ENCODE measurements at regions of chrX and their contacts with region 1.

Region 1: GRCh38 chrX:124346117-124346876 is at the start of gene SH2D1A:
- DNase-seq: peak; percentile 80
- H3K4me3 Mint-ChIP-seq: peak within 1 kb of the TSS; percentile 88
- H3K27ac Mint-ChIP-seq: peak within 1 kb of the TSS; percentile 99
- H3K4me1 Mint-ChIP-seq: peaks cover 38% of the 10 kb centered on the region
- H3K27me3 Mint-ChIP-seq: no peaks in the 10 kb centered on the region
- total RNA-seq, gene SH2D1A: 51.7 and 53.9 TPM in 2 replicates

Region 2: GRCh38 chrX:123833387-123833786 is 512.9 kb before region 1 on chrX:
- intact Hi-C with region 1: loop called (anchors 10 kb)
- DNase-seq: peak; percentile 87
- H3K4me3 Mint-ChIP-seq: no peak overlapping the region
- H3K27ac Mint-ChIP-seq: no peak overlapping the region
- H3K4me1 Mint-ChIP-seq: peaks cover 9% of the 10 kb centered on the region
- H3K27me3 Mint-ChIP-seq: peaks cover 5% of the 10 kb centered on the region

Region 3: DNA sequence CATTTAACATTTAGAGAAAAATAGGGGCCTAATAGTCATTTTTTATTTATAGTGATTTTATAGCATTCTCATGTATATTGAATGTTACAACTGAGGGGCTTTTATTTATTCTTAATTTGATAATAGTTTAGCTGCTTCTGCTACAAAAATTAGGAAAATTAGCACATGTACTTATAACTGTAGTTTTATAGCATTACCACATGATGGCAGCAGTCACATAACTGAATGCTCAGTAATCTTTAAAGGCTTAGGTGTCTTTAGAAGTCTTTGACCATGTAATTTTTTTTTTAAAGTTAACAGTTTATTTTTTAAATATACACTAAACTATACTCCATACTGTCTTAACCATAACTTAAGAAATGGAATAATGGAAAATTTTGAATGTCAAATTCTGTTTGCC is 248.2 kb before region 1 on chrX:
- intact Hi-C with region 1: loop called (anchors 5 kb)
- DNase-seq: no peak
- H3K4me3 Mint-ChIP-seq: no peak overlapping the region
- H3K27ac Mint-ChIP-seq: no peak overlapping the region
- H3K4me1 Mint-ChIP-seq: no peaks in the 10 kb centered on the region
- H3K27me3 Mint-ChIP-seq: no peaks in the 10 kb centered on the region

Region 4: GRCh38 chrX:124280294-124280902 is 65.9 kb before region 1 on chrX:
- intact Hi-C with region 1: loop called (anchors 5 kb)
- DNase-seq: no peak
- H3K4me3 Mint-ChIP-seq: peak overlapping the region; percentile 49
- H3K27ac Mint-ChIP-seq: peak overlapping the region; percentile 83
- H3K4me1 Mint-ChIP-seq: peaks cover 17% of the 10 kb centered on the region
- H3K27me3 Mint-ChIP-seq: no peaks in the 10 kb centered on the region

Region 5: DNA sequence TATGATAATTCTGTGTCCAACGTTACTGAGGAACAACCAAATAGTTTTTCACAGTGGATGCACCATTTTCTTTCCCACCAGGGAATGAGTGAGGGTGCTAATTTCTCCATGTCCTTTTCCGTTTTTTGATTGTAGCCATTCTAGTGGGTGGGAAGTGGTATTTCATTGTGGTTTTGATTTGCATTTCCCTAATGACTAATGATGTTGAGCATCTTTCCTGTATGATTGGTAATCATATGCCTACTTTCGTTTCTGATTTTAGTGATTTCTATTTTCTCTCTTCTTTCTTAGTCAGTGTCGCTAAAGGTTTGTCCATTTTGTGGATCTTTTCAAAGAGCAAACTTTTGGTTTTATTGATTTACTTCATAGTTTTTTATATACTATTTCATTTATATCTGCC is 45.9 kb before region 1 on chrX:
- intact Hi-C with region 1: loop called (anchors 2 kb)
- DNase-seq: peak; percentile 50
- H3K4me3 Mint-ChIP-seq: no peak overlapping the region
- H3K27ac Mint-ChIP-seq: peak overlapping the region; percentile 65
- H3K4me1 Mint-ChIP-seq: peaks cover 14% of the 10 kb centered on the region
- H3K27me3 Mint-ChIP-seq: no peaks in the 10 kb centered on the region

Region 6: GRCh38 chrX:124358800-124359383 is 12.6 kb after region 1 on chrX:
- intact Hi-C with region 1: loop called (anchors 1 kb)
- DNase-seq: peak; percentile 60
- H3K4me3 Mint-ChIP-seq: peak overlapping the region; percentile 73
- H3K27ac Mint-ChIP-seq: peak overlapping the region; percentile 82
- H3K4me1 Mint-ChIP-seq: peaks cover 48% of the 10 kb centered on the region
- H3K27me3 Mint-ChIP-seq: no peaks in the 10 kb centered on the region

Measured in activated CD4-positive, alpha-beta T cell treated with anti-CD3 and anti-CD28 coated beads, Interleukin-2, amount 10 ng/mL, durations not matched to agents 24 days and 14 days (primary cell).